ENCODE measurements at regions of chr18 and their contacts with region 1.

Region 1: DNA sequence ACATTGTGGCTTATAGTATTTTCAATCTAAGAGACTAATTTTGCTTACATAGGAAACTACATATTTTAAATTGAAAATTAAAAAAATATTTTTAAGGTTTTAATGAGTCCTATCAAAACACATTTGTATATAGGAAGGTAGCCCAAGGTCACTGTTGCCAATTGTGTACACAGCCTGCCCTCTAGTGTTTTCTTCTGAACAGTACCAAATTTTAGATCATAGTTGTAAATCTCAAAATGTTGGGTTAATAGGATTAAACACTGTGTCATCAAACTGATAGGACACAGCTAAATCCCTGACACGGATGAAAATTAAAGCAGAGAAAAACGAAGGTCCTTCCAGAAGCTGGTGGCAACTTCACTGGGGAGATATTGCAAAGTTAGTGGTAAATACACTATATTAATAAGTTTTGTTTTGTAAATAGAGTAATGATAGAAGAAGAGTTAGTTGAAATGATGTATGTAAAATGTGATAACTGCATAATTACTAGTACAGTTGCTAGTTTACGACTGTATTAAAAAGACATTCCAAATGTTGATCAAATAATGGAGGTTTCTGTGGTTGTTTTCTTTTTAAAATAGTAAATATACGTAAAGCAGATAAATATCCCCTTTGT is 19.7 kb downstream of the CLUL1 start:
- DNase-seq: no peak
- ATAC-seq: peak; percentile 60; the same call in 1 of the 2 replicates
- H3K4me3 ChIP-seq: no peak overlapping the region
- H3K27ac ChIP-seq: no peak overlapping the region
- H3K4me1 ChIP-seq: no peaks in the 10 kb centered on the region
- H3K27me3 ChIP-seq: no peaks in the 10 kb centered on the region
- CTCF ChIP-seq: peak; percentile 72; the same call in 1 of the 2 replicates

Region 2: DNA sequence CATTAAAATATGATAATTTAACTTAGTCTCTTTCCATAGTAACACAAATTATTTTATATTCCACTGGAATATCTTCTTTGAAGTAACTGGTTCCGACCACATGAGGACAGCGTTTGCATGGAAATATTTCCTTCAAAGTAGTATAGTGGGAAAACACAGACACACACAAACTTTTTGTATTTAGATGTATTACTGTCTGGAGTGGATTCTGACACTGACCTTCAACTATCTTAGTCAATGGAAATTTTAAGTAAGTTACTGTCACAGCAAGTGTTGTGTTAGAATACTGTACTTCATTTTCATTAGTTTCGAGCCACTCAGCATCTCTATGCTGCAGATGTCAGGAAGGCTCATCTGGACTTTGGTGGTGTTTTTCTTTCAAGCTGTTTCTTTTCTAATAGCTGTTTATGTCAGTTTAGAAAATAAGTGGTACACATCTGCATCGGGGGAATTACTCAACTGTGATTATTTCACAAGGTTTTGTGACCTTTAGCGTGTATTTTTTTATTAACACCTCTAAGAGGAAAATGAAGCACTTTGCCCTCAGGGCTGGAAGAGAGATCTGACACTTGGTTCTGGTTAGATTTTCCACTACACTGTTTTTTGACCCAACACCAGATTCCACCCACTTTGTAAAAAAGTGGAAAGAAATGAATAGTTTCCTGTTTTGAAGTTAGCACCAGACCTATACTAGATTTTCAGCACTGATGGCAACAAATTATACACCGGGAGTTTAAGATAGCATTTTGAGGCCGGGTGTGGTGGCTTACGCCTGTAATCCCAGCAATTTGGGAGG is 329.8 kb before region 1 on chr18:
- CTCF ChIA-PET with region 1: no interaction called
- POLR2A ChIA-PET with region 1: interaction called, 4 read pairs
- in situ Hi-C with region 1: no loop called
- intact Hi-C with region 1: loop called (anchors 2 kb)
- DNase-seq: no peak
- ATAC-seq: peak; percentile 53; the same call in 1 of the 2 replicates
- H3K4me3 ChIP-seq: no peak overlapping the region
- H3K27ac ChIP-seq: no peak overlapping the region
- H3K4me1 ChIP-seq: no peaks in the 10 kb centered on the region
- H3K27me3 ChIP-seq: peaks cover 10% of the 10 kb centered on the region
- CTCF ChIP-seq: peak; percentile 71; the same call in 1 of the 2 replicates

Region 3: GRCh38 chr18:374721-375168 is 241.7 kb before region 1 on chr18:
- CTCF ChIA-PET with region 1: no interaction called
- POLR2A ChIA-PET with region 1: no interaction called
- in situ Hi-C with region 1: no loop called
- intact Hi-C with region 1: no loop called
- DNase-seq: no peak
- ATAC-seq: no peak
- H3K4me3 ChIP-seq: no peak overlapping the region
- H3K27ac ChIP-seq: no peak overlapping the region
- H3K4me1 ChIP-seq: no peaks in the 10 kb centered on the region
- H3K27me3 ChIP-seq: no peaks in the 10 kb centered on the region; the same call in 1 of the 2 replicates
- CTCF ChIP-seq: no peak

Measured in Panc1 (cell line).